ENCODE measurements at regions of chr1 and their contacts with region 1.

Region 1: DNA sequence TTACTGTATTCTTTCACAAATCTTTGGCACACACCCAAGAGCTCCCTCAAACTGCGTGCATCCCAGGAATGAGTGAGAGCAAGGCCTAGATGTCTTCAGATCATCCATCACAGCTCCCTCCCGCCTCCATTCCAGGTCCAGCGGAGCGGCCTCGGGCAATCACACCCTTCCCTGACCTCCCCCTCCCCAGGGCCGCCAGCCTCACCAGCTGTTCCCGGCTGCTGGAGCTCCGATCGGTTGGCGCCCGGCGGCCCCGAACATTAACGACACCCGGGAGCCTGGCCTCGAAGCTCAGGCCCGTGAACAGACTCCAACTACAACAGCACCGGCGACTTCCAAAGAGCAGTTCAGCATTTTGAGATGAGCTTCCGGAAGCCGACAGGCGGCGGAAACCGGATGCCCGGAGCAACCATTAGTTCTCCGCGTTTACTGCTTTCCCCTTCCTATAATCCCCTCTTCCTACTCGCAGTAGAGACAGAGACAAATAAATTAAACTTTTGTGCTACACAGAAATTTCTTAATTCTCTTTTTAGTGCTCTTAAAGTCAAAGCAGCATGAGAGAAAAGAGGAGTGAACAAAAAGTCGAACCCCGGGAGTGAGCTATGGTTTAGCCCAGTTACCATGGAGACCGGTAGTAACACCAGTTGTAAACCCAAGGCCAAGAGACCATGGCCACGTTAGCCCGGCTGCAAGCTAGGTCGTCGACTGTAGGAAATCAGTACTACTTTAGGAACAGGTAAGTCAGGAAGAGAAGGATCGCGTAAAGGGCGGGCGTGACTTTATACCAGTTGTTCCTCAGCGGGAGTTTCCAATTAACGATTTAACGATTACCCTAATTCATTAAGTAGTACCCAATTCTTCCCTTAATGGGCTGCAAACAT is at the starts of genes GPATCH2 and SPATA17:
- DNase-seq: peak; percentile 59
- ATAC-seq: peak; percentile 89
- H3K4me3 Mint-ChIP-seq: peak within 1 kb of the TSS; percentile 97
- H3K27ac Mint-ChIP-seq: peak within 1 kb of the TSS; percentile 100
- H3K4me1 Mint-ChIP-seq: peaks cover 28% of the 10 kb centered on the region
- H3K27me3 Mint-ChIP-seq: peaks cover 15% of the 10 kb centered on the region
- CTCF ChIP-seq: no peak
- total RNA-seq, gene GPATCH2: 13.5 and 17.5 TPM in 2 replicates
- total RNA-seq, gene SPATA17: not detected in 2 replicates

Region 2: DNA sequence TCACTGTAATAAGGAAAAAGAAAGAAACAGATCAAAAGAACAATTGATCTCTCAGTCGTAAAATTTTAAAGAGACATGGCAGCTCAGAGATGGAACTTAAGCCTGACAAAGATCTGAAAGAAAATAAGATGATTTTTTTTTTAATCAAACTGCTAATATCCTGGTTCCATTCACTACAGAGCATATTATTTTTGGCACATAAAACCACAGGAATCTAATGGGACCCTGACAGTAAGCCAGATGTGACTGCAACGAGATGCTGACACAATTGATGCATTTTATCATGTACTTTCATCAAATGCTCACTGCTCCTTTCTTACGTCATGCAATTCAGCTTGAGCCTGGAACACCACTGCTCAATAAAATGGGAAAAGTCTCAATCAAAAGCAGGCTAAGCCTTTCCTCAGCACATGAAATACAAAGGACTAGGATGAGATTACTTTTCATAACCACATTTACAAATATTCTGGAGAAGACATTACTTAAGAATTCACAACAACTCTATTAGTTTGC is 16.7 kb before region 1 on chr1:
- CTCF ChIA-PET with region 1: interaction called, 3 read pairs
- POLR2A ChIA-PET with region 1: interaction called, 4 read pairs
- intact Hi-C with region 1: loop called (anchors 2 kb)
- DNase-seq: no peak
- ATAC-seq: no peak
- H3K4me3 Mint-ChIP-seq: no peak overlapping the region
- H3K27ac Mint-ChIP-seq: no peak overlapping the region
- H3K4me1 Mint-ChIP-seq: no peaks in the 10 kb centered on the region
- H3K27me3 Mint-ChIP-seq: no peaks in the 10 kb centered on the region
- CTCF ChIP-seq: no peak

Region 3: DNA sequence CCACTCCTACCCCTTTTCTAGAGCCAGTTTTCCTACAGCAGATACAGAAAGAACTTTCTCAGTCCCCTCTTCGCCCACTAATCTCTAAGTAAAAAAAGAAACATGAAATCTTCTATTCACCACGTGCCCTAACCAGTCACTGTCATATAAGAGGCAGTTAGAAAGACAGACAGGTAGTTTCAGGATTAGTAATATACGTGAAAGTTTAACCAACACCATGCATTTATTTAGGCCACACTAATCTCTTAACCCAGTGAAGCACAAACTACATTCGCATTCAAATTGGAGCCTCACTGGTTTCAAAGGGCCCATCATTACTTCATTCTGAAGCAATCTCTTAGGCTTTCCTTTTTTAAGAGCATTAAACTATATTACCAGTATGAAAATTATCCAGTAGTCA is 10.1 kb before region 1 on chr1:
- CTCF ChIA-PET with region 1: interaction called, 4 read pairs
- POLR2A ChIA-PET with region 1: interaction called, 13 read pairs
- intact Hi-C with region 1: no loop called
- DNase-seq: no peak
- ATAC-seq: peak; percentile 74
- H3K4me3 Mint-ChIP-seq: no peak overlapping the region
- H3K27ac Mint-ChIP-seq: no peak overlapping the region
- H3K4me1 Mint-ChIP-seq: peaks cover 19% of the 10 kb centered on the region
- H3K27me3 Mint-ChIP-seq: no peaks in the 10 kb centered on the region
- CTCF ChIP-seq: no peak

Region 4: DNA sequence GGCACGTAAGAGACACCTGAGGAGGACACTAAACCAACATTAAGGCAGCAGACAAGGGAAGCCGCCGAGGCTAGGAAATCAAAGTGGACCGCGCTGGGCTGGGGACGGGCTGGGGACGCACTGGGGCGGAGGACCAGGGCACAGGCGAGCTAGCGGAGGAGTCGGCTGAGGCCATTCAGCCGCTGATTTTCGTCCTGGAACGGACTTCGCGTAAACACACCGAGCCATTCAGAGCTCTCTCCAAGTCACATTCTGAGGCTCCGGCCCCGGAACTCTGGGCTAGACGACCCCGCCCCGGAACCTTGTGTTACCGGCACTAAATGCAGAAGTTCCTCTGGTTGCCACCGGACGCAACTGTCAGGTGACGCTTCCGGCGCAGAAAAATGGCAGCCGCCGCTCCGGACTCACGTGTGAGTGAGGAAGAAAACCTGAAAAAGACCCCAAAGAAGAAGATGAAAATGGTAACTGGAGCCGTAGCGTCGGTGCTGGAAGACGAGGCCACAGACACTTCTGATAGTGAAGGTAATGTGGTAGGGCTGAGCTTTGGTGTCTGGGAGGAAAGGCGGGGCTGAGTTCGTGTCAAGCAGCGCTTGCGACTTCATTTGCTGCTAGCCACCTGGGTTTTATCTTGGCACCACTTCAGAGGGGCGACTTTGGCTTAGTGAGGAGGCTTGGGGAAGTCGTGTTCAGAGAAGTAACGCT is 654.1 kb after region 1 on chr1 and contains the start of gene RRP15:
- CTCF ChIA-PET with region 1: no interaction called
- POLR2A ChIA-PET with region 1: interaction called, 8 read pairs
- intact Hi-C with region 1: loop called (anchors 1 kb)
- DNase-seq: peak; percentile 85
- ATAC-seq: peak; percentile 99
- H3K4me3 Mint-ChIP-seq: peak within 1 kb of the TSS; percentile 96
- H3K27ac Mint-ChIP-seq: peak within 1 kb of the TSS; percentile 97
- H3K4me1 Mint-ChIP-seq: peaks cover 30% of the 10 kb centered on the region
- H3K27me3 Mint-ChIP-seq: peaks cover 9% of the 10 kb centered on the region
- CTCF ChIP-seq: no peak
- total RNA-seq, gene RRP15: 26.9 and 27.3 TPM in 2 replicates